ENCODE measurements at regions of chrX and their contacts with region 1.

Region 1: DNA sequence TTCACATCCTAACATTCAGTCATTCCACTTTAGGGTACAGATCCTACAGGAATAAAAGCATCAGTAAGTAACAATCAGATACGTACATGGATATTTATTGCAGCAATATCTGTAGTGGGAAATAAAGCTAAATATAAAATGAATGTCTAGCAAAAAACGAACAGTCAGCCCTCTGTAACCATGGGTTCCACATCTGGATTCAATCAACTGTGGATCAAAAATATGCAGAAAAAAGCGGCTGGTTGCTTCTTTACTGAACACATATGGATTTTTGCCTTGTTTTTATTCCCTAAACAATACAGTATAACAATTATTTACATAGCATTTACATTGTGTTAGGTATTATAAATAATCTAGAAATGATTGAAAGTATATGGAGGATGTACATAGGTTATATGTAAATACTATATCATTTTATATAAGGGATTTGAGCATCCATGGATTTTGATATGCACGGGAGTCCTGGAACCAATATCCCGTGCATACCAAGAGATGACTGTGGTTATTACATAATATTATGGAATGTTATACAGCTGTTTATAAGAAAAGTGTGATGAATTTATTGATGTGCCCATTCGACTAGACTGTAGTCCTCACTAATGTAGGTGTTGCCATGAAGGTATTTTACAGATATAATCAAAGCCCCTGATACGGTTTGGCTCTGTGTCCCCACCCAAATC is 132.8 kb downstream of the ARHGEF9 start:
- DNase-seq: no peak
- H3K4me3 ChIP-seq: no peak overlapping the region
- H3K27ac ChIP-seq: no peak overlapping the region
- H3K27me3 ChIP-seq: no peaks in the 10 kb centered on the region
- CTCF ChIP-seq: no peak

Region 2: DNA sequence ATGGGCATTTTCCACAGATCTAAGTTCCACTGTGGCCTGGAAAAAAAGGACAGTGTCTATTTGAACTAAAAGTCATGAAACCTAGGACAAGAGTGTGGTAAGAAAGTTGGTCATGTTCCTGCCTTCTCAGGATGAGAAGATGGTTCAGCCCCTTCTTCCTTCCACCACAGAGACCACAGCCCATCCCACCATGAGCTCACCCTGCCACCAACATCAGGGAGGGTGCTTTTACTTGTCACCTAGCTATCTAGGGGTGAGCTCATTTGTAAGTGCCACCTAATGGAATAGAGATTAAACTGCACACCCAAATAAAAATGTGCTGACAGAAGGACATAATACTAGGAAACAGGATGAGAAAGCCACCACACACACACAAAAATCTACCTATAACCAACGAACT is 537.0 kb before region 1 on chrX:
- CTCF ChIA-PET with region 1: no interaction called
- POLR2A ChIA-PET with region 1: no interaction called
- DNase-seq: no peak
- H3K4me3 ChIP-seq: no peak overlapping the region
- H3K27ac ChIP-seq: no peak overlapping the region
- H3K27me3 ChIP-seq: no peaks in the 10 kb centered on the region
- CTCF ChIP-seq: no peak

Region 3: GRCh38 chrX:63635750-63636149 is 16.5 kb before region 1 on chrX:
- CTCF ChIA-PET with region 1: interaction called, 12 read pairs
- POLR2A ChIA-PET with region 1: no interaction called
- DNase-seq: no peak
- H3K4me3 ChIP-seq: no peak overlapping the region
- H3K27ac ChIP-seq: no peak overlapping the region
- H3K27me3 ChIP-seq: no peaks in the 10 kb centered on the region
- CTCF ChIP-seq: no peak

Region 4: DNA sequence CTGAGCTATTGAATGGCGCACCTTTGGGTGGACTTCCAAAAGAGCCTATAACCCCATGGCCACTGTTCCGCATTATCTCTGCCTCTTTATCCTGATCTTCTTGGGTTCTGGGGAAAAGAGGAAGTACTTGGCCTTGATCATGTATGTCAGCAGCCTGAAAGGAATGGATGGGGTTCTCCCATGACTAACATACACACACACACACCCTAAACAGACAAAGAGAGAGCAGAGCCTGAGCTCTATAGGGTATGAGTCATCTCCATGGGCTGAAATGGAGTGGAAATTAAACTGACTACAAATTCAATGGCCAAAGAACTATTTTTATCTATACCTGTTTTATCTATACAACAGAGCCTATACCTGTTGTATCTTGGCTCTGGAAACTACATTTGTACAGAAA is 884.5 kb after region 1 on chrX:
- CTCF ChIA-PET with region 1: no interaction called
- POLR2A ChIA-PET with region 1: no interaction called
- DNase-seq: no peak
- H3K4me3 ChIP-seq: no peak overlapping the region
- H3K27ac ChIP-seq: no peak overlapping the region
- H3K27me3 ChIP-seq: no peaks in the 10 kb centered on the region
- CTCF ChIP-seq: no peak